Endothelial cell of umbilical vein (primary cell): ENCODE measurements at regions of chrX and their contacts with region 1.

Region 1: GRCh38 chrX:150982788-150983520 is at the start of gene HMGB3:
- DNase-seq: peak; percentile 92
- H3K4me3 ChIP-seq: peak within 1 kb of the TSS; percentile 56 to 65 (median 56)
- H3K27ac ChIP-seq: peak within 1 kb of the TSS; percentile 53
- H3K4me1 ChIP-seq: peaks cover 7% of the 10 kb centered on the region
- H3K27me3 ChIP-seq: no peaks in the 10 kb centered on the region
- CTCF ChIP-seq: no peak
- POLR2A ChIP-seq: no peak
- total RNA-seq, gene HMGB3: 124 and 127 TPM in 2 replicates

Region 2: DNA sequence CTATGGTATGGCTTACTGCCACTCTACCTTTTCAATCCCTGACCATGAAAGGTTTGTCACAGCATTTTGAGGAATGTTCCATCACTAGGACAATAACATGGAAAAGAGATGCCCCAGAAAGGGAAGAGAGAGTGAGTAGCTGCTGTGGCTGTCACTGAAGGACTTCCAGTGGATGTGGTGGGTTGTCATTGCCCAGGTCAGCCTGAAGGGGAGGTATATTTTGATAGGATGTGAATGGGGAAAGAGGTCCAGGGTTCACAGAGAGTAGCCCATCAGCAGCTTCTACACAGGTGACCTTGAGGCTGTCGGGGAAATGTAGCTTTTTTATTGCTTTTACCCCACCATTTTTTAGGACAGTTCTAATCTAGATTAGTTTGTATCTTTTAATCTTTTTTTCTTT is 383.7 kb before region 1 on chrX:
- CTCF ChIA-PET with region 1: no interaction called
- POLR2A ChIA-PET with region 1: no interaction called
- dilution Hi-C with region 1: no loop called
- intact Hi-C with region 1: no loop called
- DNase-seq: no peak
- H3K4me3 ChIP-seq: no peak overlapping the region
- H3K27ac ChIP-seq: no peak overlapping the region
- H3K4me1 ChIP-seq: no peaks in the 10 kb centered on the region
- H3K27me3 ChIP-seq: no peaks in the 10 kb centered on the region
- CTCF ChIP-seq: no peak
- POLR2A ChIP-seq: no peak

Region 3: DNA sequence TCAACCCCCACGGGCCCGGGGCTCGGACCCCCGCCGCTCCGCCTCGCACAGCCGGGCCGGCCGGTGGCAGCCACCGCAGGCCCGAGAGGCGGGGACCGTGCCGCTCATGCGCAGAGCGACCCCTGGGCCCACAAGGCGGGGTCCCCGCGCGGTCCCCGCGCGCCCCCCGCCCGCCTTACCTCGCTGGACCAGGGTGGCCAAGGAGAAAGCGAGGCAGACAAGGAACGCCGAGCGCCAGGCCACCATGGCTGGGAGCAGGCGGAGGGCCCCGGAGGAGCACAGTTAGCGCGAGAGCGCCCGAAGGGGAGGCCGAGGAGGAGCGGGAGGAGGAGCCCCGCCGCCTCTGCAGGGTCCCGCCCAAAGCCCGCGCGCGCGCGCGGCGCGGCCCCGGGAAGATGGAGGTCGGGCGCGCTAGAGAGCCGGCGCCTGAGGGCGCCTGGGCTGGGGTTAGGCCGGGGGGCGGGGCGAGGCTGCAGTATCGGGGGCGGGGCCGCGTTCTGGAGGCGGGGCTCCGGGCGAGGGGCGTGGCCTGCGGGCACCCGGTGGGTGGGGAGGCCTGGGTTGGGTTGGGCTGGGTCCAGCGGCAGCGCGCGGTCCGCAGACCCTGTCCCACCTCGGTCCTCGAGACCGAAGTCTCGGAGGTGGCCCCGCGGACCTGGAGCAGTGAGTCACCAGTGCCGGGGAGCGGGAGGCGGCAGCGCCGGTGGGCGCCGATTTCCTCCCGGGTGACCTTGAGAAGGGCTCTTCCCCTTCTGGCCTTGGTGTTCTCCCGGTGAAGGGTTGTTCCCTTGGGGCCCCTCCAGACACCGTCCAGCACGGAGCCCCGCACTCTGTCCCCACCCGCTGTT is 84.4 kb before region 1 on chrX and contains the start of gene CD99L2:
- CTCF ChIA-PET with region 1: no interaction called
- POLR2A ChIA-PET with region 1: no interaction called
- dilution Hi-C with region 1: no loop called
- intact Hi-C with region 1: loop called (anchors 1 kb)
- DNase-seq: peak; percentile 80
- H3K4me3 ChIP-seq: peak within 1 kb of the TSS; percentile 56 to 74 (median 58)
- H3K27ac ChIP-seq: peak within 1 kb of the TSS; percentile 45
- H3K4me1 ChIP-seq: peaks cover 7% of the 10 kb centered on the region
- H3K27me3 ChIP-seq: no peaks in the 10 kb centered on the region
- CTCF ChIP-seq: no peak
- POLR2A ChIP-seq: peak; percentile 54
- total RNA-seq, gene CD99L2: 32.4 and 33.2 TPM in 2 replicates

Region 4: GRCh38 chrX:150934453-150934852 is 48.5 kb before region 1 on chrX:
- CTCF ChIA-PET with region 1: no interaction called
- POLR2A ChIA-PET with region 1: no interaction called
- dilution Hi-C with region 1: no loop called
- intact Hi-C with region 1: no loop called
- DNase-seq: no peak
- H3K4me3 ChIP-seq: no peak overlapping the region
- H3K27ac ChIP-seq: no peak overlapping the region
- H3K4me1 ChIP-seq: no peaks in the 10 kb centered on the region
- H3K27me3 ChIP-seq: no peaks in the 10 kb centered on the region
- CTCF ChIP-seq: no peak
- POLR2A ChIP-seq: no peak

Region 5: GRCh38 chrX:150967786-150968185 is 15.2 kb before region 1 on chrX:
- CTCF ChIA-PET with region 1: no interaction called
- POLR2A ChIA-PET with region 1: no interaction called
- dilution Hi-C with region 1: no loop called
- intact Hi-C with region 1: no loop called
- DNase-seq: no peak
- H3K4me3 ChIP-seq: no peak overlapping the region
- H3K27ac ChIP-seq: no peak overlapping the region
- H3K4me1 ChIP-seq: no peaks in the 10 kb centered on the region
- H3K27me3 ChIP-seq: peaks cover 0 to 1% of the 10 kb centered on the region in 2 experiments
- CTCF ChIP-seq: no peak
- POLR2A ChIP-seq: no peak

Region 6: DNA sequence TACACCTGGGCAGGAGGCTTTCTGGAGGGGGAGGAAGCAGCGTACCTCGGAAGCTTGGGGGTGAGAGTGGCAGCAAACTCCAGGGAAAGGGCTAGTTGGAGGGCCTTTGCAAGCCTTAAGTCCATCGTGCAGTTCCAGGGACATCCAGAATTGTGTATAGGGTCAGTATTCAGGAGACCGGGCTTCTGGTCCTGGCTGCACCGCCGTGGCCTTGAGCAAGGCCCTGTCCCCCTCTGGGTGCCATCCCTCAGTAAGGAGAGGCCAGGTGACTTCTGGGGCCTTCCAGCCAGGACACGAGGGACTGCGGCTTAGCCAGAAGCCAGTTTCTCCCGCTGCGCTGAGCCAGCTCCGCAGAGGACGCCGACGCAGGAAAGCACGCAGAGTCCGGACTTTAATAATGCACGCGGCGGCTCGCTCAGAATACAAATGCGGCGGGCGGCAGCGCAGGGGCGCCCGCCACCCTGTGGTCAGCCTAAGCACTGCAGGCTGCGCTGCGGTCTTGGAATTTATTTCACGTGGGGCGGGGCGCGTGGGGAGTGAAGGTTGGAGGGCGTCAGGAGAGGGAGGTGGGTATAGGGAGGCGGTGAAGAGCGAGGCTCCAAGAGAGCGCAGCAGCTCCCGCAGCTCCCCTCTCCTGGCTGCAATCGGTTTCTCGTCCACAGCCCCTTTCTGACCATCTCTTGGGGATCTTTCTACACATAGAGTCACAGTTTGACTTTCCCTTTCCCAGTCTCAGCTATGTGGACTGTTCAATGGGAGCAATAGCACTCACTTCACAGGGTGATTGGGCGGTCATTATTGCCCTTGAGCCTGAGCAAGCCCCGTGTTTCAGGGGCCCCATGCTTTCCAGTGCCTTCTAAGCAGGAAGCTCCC is 99.4 kb after region 1 on chrX:
- CTCF ChIA-PET with region 1: no interaction called
- POLR2A ChIA-PET with region 1: no interaction called
- dilution Hi-C with region 1: no loop called
- intact Hi-C with region 1: loop called (anchors 5 kb)
- DNase-seq: peak; percentile 42
- H3K4me3 ChIP-seq: no peak overlapping the region
- H3K27ac ChIP-seq: no peak overlapping the region
- H3K4me1 ChIP-seq: no peaks in the 10 kb centered on the region
- H3K27me3 ChIP-seq: no peaks in the 10 kb centered on the region
- CTCF ChIP-seq: peak; percentile 78 to 83
- POLR2A ChIP-seq: no peak

Region 7: GRCh38 chrX:151396825-151397740 is 414.1 kb after region 1 on chrX and contains the start of gene VMA21:
- CTCF ChIA-PET with region 1: no interaction called
- POLR2A ChIA-PET with region 1: no interaction called
- dilution Hi-C with region 1: no loop called
- intact Hi-C with region 1: loop called (anchors 2 kb)
- DNase-seq: peak; percentile 81
- H3K4me3 ChIP-seq: peak within 1 kb of the TSS; percentile 69 to 91 (median 83)
- H3K27ac ChIP-seq: peak within 1 kb of the TSS; percentile 80
- H3K4me1 ChIP-seq: peaks cover 19% of the 10 kb centered on the region
- H3K27me3 ChIP-seq: no peaks in the 10 kb centered on the region
- CTCF ChIP-seq: no peak
- POLR2A ChIP-seq: no peak
- total RNA-seq, gene VMA21: 34.2 and 40.9 TPM in 2 replicates